Transverse colon (tissue), 4 donors: ENCODE measurements at regions of chr3 and their contacts with region 1.

Region 1: GRCh38 chr3:71583566-71584449 is at the start of gene FOXP1:
- DNase-seq: peak; percentile 83
- H3K4me3 ChIP-seq: peak within 1 kb of the TSS; percentile 66 to 87 (median 70)
- H3K27ac ChIP-seq: peak within 1 kb of the TSS; percentile 97 to 100 (median 98)
- H3K4me1 ChIP-seq: peaks cover 3 to 41% (median 17%) of the 10 kb centered on the region in 4 donors
- H3K27me3 ChIP-seq: no peaks in the 10 kb centered on the region
- CTCF ChIP-seq: no peak
- EP300 ChIP-seq: no peak
- POLR2A ChIP-seq: peak; percentile 63
- total RNA-seq, gene FOXP1: 102 to 260 (median 150) TPM

Region 2: DNA sequence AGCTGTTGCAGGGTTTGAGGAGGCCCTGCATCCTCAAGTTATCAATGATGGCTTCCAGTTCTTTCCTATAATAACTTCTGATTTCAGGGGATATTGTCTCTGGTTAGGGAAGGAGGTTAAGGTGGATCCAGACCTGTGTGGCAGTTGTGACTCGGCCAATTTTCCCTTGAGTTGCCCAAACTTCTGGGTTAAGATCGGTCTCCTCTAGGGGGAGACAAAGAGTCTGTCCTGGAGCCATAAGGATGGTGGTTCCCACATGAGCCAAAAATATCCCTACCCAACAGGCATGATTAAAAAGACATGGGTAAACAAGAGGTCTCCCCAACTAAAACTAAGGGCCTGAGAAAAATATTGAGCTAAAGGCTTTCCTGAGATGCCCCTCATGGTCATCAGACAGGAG is 1043.9 kb before region 1 on chr3:
- in situ Hi-C with region 1: no loop called
- intact Hi-C with region 1: loop called (anchors 10 kb)
- DNase-seq: no peak
- H3K4me3 ChIP-seq: no peak overlapping the region
- H3K27ac ChIP-seq: no peak overlapping the region
- H3K4me1 ChIP-seq: no peaks in the 10 kb centered on the region
- H3K27me3 ChIP-seq: no peaks in the 10 kb centered on the region
- CTCF ChIP-seq: no peak
- EP300 ChIP-seq: no peak
- POLR2A ChIP-seq: no peak

Region 3: GRCh38 chr3:70982700-70983140 is 601.1 kb before region 1 on chr3:
- in situ Hi-C with region 1: loop called in 1 of 4 experiments (anchors 25 kb)
- intact Hi-C with region 1: no loop called
- DNase-seq: no peak
- H3K4me3 ChIP-seq: no peak overlapping the region
- H3K27ac ChIP-seq: peak overlapping the region; percentile 72 to 83 (median 82)
- H3K4me1 ChIP-seq: peaks cover 9 to 54% (median 18%) of the 10 kb centered on the region in 4 donors
- H3K27me3 ChIP-seq: no peaks in the 10 kb centered on the region
- CTCF ChIP-seq: no peak
- EP300 ChIP-seq: no peak
- POLR2A ChIP-seq: no peak

Region 4: GRCh38 chr3:71064288-71064955 is 519.4 kb before region 1 on chr3:
- in situ Hi-C with region 1: loop called in 1 of 4 experiments (anchors 25 kb)
- intact Hi-C with region 1: loop called (anchors 10 kb)
- DNase-seq: peak; percentile 62
- H3K4me3 ChIP-seq: peak overlapping the region; percentile 49 to 85 (median 70)
- H3K27ac ChIP-seq: peak overlapping the region; percentile 92 to 98 (median 98)
- H3K4me1 ChIP-seq: peaks cover 19 to 80% (median 53%) of the 10 kb centered on the region in 4 donors
- H3K27me3 ChIP-seq: no peaks in the 10 kb centered on the region
- CTCF ChIP-seq: peak in 2 of 5 experiments; percentile 9 to 32
- EP300 ChIP-seq: no peak
- POLR2A ChIP-seq: peak; percentile 61

Region 5: GRCh38 chr3:71305231-71306206 is 278.3 kb before region 1 on chr3:
- in situ Hi-C with region 1: loop called in 1 of 4 experiments (anchors 25 kb)
- intact Hi-C with region 1: loop called (anchors 5 kb)
- DNase-seq: peak; percentile 19
- H3K4me3 ChIP-seq: peak overlapping the region in 3 of 4 donors; percentile 22 to 37 (median 23)
- H3K27ac ChIP-seq: peak overlapping the region; percentile 68 to 84 (median 82)
- H3K4me1 ChIP-seq: peaks cover 10 to 57% (median 29%) of the 10 kb centered on the region in 4 donors
- H3K27me3 ChIP-seq: no peaks in the 10 kb centered on the region
- CTCF ChIP-seq: no peak
- EP300 ChIP-seq: no peak
- POLR2A ChIP-seq: no peak

Region 6: DNA sequence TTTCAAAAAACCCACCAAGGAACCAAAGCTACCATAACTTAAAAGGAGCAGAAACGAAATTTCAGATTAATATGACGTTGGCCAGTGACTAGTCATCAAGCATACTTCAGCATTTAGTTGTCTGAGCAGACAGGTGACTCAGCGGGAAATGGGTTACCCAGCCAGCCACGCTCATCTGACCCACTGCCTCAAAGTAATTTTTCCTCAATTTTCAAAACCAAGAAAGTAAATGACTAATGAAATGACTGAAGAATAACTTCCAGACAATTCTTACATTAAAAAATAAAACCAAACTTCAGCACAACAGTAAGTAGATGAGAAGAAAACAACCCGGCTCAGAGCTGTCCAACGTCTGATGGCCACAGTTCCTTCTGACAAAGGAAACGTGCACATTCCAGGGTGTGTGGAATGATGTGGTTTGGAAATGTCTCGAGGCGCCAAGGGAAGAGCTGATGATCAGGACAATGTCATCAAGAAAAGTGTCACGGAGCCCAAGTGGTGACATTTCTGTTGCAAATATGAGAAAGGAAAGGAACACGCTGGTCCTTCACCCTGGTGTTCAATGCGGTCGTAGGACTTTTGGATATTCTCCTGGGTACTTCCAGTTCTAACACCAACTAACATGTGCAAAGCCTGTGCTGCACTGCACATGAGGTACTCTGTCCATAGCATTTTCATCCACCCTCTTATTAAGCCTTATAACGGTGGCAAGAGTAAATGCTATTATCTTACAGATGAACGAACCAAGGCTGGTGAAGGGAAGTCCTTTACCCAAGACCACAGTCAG is 79.4 kb before region 1 on chr3:
- in situ Hi-C with region 1: no loop called
- intact Hi-C with region 1: no loop called
- DNase-seq: no peak
- H3K4me3 ChIP-seq: no peak overlapping the region
- H3K27ac ChIP-seq: no peak overlapping the region
- H3K4me1 ChIP-seq: no peaks in the 10 kb centered on the region
- H3K27me3 ChIP-seq: no peaks in the 10 kb centered on the region
- CTCF ChIP-seq: no peak
- EP300 ChIP-seq: no peak
- POLR2A ChIP-seq: no peak

Region 7: GRCh38 chr3:71759401-71759800 is 175.6 kb after region 1 on chr3:
- in situ Hi-C with region 1: no loop called
- intact Hi-C with region 1: no loop called
- DNase-seq: no peak
- H3K4me3 ChIP-seq: no peak overlapping the region
- H3K27ac ChIP-seq: no peak overlapping the region
- H3K4me1 ChIP-seq: no peaks in the 10 kb centered on the region
- H3K27me3 ChIP-seq: peaks cover 59% of the 10 kb centered on the region
- CTCF ChIP-seq: no peak
- EP300 ChIP-seq: no peak
- POLR2A ChIP-seq: no peak

Region 8: GRCh38 chr3:72086042-72086742 is 502.4 kb after region 1 on chr3:
- in situ Hi-C with region 1: no loop called
- intact Hi-C with region 1: no loop called
- DNase-seq: no peak
- H3K4me3 ChIP-seq: no peak overlapping the region
- H3K27ac ChIP-seq: no peak overlapping the region
- H3K4me1 ChIP-seq: peaks cover 3 to 15% (median 11%) of the 10 kb centered on the region in 4 donors
- H3K27me3 ChIP-seq: no peaks in the 10 kb centered on the region
- CTCF ChIP-seq: no peak
- EP300 ChIP-seq: no peak
- POLR2A ChIP-seq: no peak